Activated CD8-positive, alpha-beta memory T cell treated with anti-CD3 and anti-CD28 coated beads, Interleukin-2, amount 10 ng/mL, durations not matched to agents 7 days and 5 days (primary cell): ENCODE measurements at regions of chr17 and their contacts with region 1.

Region 1: DNA sequence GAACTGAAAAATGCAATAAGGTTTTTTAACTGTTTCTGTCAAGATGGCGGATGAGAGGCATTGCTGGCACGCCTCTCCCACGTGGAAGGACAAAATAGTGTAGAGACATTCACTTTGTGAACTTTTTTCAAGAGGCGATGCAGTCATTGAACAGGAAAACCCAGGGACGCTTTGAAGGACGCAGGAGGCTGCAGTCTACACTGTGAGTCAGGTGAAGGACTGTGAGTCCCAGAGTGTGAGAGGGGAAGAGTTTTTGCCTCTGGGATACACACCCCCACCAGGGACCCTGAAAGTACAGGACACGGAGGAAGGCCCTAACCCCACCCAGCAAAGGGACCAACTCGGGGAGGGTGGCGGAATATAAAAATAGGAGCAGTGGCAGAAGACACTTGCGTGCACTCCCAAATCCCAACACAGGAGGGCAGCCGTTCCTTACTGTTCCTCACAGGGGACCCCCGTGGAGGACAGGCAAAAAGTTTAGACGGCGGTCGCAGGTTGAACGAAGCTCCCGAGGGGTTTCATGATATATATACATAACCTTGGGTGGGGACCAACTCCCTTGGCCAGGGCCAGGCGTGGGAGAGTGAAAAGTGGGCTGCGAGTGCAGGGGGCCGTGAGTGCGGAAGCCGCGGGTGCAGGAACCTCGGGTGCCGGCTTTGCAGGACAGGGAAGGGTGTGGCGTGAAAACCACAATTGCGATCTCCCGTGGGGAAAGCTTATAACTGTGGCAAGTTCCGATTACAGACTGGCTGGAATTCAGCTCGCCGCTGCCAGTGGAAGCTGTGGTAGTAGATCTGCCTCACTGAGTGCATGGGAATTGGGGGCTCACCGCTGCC is 82.0 kb upstream of the ALOX12 start:
- DNase-seq: peak; percentile 88
- ATAC-seq: peak; percentile 86
- H3K4me3 Mint-ChIP-seq: peak overlapping the region; percentile 72
- H3K27ac Mint-ChIP-seq: peak overlapping the region; percentile 54
- H3K4me1 Mint-ChIP-seq: peaks cover 23% of the 10 kb centered on the region
- H3K27me3 Mint-ChIP-seq: peaks cover 16% of the 10 kb centered on the region

Region 2: GRCh38 chr17:6894206-6894528 is 19.7 kb before region 1 on chr17:
- CTCF ChIA-PET with region 1: interaction called, 13 read pairs
- DNase-seq: no peak
- ATAC-seq: no peak
- H3K4me3 Mint-ChIP-seq: no peak overlapping the region
- H3K27ac Mint-ChIP-seq: no peak overlapping the region
- H3K4me1 Mint-ChIP-seq: no peaks in the 10 kb centered on the region
- H3K27me3 Mint-ChIP-seq: peaks cover 51% of the 10 kb centered on the region

Region 3: GRCh38 chr17:7004398-7005253 is 90.8 kb after region 1 on chr17:
- CTCF ChIA-PET with region 1: interaction called, 136 read pairs
- DNase-seq: no peak
- ATAC-seq: peak; percentile 95
- H3K4me3 Mint-ChIP-seq: no peak overlapping the region
- H3K27ac Mint-ChIP-seq: peak overlapping the region; percentile 40
- H3K4me1 Mint-ChIP-seq: peaks cover 20% of the 10 kb centered on the region
- H3K27me3 Mint-ChIP-seq: no peaks in the 10 kb centered on the region

Region 4: GRCh38 chr17:7014261-7014994 is 100.6 kb after region 1 on chr17:
- CTCF ChIA-PET with region 1: interaction called, 136 read pairs
- DNase-seq: peak; percentile 99
- ATAC-seq: peak; percentile 87
- H3K4me3 Mint-ChIP-seq: peak overlapping the region; percentile 83
- H3K27ac Mint-ChIP-seq: peak overlapping the region; percentile 98
- H3K4me1 Mint-ChIP-seq: peaks cover 67% of the 10 kb centered on the region
- H3K27me3 Mint-ChIP-seq: no peaks in the 10 kb centered on the region

Region 5: GRCh38 chr17:7204336-7204735 is 290.5 kb after region 1 on chr17:
- CTCF ChIA-PET with region 1: no interaction called
- DNase-seq: no peak
- ATAC-seq: no peak
- H3K4me3 Mint-ChIP-seq: peak overlapping the region; percentile 69
- H3K27ac Mint-ChIP-seq: peak overlapping the region; percentile 84
- H3K4me1 Mint-ChIP-seq: peaks cover 24% of the 10 kb centered on the region
- H3K27me3 Mint-ChIP-seq: no peaks in the 10 kb centered on the region